HEK293 (cell line): ENCODE measurements at regions of chr12 and their contacts with region 1.

Region 1: DNA sequence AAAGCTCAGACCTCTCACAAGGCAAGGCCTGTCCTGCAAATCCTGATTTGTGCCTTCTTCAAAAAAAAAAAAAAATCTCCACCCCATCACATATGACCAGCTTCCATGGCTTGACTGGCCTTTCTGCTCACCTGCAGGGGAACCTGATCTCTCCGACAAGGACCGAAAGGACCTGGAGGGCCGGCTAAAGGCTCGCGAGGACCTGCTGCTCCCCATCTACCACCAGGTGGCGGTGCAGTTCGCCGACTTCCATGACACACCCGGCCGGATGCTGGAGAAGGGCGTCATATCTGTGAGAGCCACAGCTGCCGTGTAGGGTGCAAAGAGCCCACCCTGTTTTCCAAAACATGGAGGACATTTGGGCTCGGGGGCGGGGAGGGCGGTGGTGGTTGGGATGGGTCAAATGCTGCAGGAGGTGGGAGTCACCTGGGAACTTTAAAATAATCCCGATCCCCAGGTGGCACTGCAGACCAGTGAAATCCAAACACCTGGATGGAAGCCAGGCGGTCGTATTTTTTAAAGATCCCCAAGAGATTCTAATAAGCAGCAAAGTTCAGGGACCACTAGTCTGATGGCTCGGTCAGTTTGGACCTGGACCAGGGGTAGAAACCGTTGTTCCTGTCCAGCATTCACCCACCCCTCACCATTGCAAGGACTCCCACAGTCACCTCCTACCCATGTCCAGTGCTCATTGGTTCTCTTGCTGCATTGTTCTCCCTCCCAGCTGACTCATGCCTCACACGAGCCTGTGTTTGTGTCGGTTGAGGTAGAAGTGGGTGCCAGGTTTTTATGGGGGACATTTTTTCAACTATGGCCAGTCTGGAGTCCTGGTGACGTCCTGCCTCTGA is 44.8 kb downstream of the FOXN4 start:
- H3K4me3 ChIP-seq: no peak overlapping the region
- H3K27ac ChIP-seq: no peak overlapping the region
- H3K4me1 ChIP-seq: no peaks in the 10 kb centered on the region
- CTCF ChIP-seq: peak; percentile 88

Region 2: GRCh38 chr12:109247831-109248654 is 16.3 kb before region 1 on chr12:
- CTCF ChIA-PET with region 1: interaction called, 13 read pairs
- POLR2A ChIA-PET with region 1: no interaction called
- H3K4me3 ChIP-seq: no peak overlapping the region
- H3K27ac ChIP-seq: no peak overlapping the region
- H3K4me1 ChIP-seq: peaks cover 10% of the 10 kb centered on the region
- CTCF ChIP-seq: no peak

Region 3: DNA sequence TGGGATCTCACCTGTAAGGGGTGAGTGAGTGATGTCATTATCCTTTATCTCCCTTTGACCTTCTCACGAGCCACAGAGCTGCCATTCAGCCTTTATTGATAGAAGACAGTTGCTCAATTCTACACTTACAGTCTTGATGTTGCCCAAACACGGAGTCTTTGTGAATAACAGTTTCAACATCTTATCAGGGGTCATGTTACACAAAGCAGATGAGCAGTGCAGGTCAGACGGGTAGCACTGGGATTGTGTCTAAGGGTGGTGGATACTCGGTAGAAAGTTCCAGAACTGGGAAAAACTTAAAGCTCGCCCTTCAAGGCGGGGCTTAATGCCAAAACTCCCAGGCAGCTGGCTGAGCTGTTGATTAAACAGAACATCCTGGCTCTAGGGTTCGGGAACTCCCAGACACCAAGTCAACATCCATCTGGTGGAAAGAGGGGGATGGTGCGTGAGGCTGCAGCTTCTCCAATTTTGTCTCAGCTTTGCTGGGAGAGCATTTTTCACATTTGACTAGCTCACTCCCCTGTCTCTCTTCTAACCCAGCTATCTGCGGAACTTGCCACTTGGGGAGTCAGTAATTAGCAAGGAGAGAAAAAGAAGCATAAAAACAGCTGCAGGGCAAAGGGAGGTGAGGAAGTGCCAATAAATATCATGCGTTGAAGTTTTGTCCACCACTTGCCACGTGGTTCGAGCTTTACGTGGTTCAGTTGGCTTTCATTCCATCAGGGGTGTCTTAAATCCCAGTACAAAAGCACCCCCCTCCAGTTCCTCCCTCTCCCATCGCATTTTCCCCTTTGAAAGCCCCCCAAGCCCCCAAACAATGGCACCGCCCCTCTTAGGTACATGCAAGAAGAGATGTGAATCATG is 13.8 kb after region 1 on chr12:
- CTCF ChIA-PET with region 1: interaction called, 14 read pairs
- POLR2A ChIA-PET with region 1: interaction called, 3 read pairs
- H3K4me3 ChIP-seq: no peak overlapping the region
- H3K27ac ChIP-seq: no peak overlapping the region
- H3K4me1 ChIP-seq: no peaks in the 10 kb centered on the region
- CTCF ChIP-seq: no peak

Region 4: GRCh38 chr12:109377139-109377685 is 112.9 kb after region 1 on chr12:
- CTCF ChIA-PET with region 1: interaction called, 14 read pairs
- POLR2A ChIA-PET with region 1: no interaction called
- H3K4me3 ChIP-seq: no peak overlapping the region
- H3K27ac ChIP-seq: no peak overlapping the region
- H3K4me1 ChIP-seq: no peaks in the 10 kb centered on the region
- CTCF ChIP-seq: no peak

Region 5: DNA sequence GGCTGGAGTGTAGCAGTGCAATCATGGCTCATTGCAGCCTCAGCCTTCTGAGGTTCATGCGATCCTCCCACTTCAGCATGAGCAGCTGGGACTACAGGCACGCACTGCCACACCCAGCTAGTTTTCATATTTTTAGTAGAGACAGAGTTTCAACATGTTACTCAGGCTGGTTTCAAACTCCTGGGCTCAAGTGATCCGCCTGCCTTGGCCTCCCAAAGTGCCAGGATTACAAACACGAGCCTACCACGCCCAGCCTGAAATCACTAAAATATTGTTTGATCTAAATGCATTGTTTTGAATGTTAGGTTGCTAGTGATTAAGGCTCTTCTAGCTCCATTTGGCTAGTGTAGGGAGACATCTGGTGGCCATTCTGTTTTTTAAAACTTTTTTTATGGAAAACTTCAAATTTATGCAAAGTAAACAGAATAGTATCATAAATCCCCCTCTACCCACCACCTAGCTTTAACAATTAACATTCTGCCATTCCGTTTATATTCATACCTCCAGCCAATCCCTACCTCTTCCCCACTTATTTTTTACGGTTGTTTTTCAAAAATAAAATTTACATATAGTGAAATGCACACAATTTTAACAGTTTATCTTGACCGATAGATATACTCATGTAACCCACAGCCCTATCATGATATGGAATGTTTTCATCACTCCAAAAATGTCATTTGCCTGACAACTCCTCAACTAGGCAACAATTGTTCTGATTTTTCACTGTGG is 121.2 kb after region 1 on chr12:
- CTCF ChIA-PET with region 1: interaction called, 93 read pairs
- POLR2A ChIA-PET with region 1: no interaction called
- H3K4me3 ChIP-seq: no peak overlapping the region
- H3K27ac ChIP-seq: no peak overlapping the region
- H3K4me1 ChIP-seq: no peaks in the 10 kb centered on the region
- CTCF ChIP-seq: peak; percentile 65

Region 6: DNA sequence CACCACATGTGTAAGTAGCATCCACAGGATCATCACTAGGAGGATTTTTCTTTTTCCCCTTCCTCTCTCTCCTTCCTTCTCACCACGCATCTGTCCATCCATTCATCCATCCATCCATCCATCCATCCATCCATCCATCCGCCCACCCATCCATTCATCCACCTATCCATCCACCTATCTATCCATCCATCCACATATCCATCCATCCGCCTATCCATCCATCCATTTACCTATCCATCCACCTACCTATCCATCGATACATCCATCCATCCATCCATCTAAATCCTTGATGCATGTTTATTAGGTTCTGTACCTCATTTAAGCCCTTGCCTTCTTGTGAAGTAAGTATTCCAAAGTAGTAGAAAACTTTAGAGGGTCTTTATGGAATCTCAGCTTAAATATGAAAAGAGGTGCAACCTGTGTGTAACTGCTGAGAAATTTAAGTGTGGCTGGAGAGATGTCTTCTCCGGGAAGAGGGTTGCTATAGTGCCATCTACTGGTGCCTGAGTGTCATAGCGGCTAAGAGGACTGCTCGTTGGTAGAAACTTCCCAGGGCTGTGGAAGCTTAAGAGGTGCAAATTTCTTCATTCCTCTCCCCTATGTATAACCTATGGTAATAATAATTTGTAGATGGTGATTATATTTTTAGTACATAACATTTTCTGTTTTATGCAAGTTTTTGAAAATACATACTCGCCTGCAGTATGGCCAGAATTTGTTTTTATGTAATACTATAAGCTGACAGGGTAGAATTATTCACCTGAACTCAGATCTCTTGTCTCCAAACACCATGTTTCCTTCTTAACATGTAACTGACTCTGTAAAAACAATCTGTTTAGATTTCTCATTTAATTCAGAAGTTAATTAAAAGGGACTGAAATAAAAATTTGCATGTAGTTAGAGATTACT is 129.4 kb after region 1 on chr12:
- CTCF ChIA-PET with region 1: interaction called, 93 read pairs
- POLR2A ChIA-PET with region 1: no interaction called
- H3K4me3 ChIP-seq: no peak overlapping the region
- H3K27ac ChIP-seq: no peak overlapping the region
- H3K4me1 ChIP-seq: no peaks in the 10 kb centered on the region
- CTCF ChIP-seq: no peak

Region 7: GRCh38 chr12:109736552-109737108 is 472.3 kb after region 1 on chr12:
- CTCF ChIA-PET with region 1: no interaction called
- POLR2A ChIA-PET with region 1: no interaction called
- H3K4me3 ChIP-seq: no peak overlapping the region
- H3K27ac ChIP-seq: no peak overlapping the region
- H3K4me1 ChIP-seq: no peaks in the 10 kb centered on the region
- CTCF ChIP-seq: no peak